ENCODE measurements at regions of chr9 and their contacts with region 1.

Region 1: DNA sequence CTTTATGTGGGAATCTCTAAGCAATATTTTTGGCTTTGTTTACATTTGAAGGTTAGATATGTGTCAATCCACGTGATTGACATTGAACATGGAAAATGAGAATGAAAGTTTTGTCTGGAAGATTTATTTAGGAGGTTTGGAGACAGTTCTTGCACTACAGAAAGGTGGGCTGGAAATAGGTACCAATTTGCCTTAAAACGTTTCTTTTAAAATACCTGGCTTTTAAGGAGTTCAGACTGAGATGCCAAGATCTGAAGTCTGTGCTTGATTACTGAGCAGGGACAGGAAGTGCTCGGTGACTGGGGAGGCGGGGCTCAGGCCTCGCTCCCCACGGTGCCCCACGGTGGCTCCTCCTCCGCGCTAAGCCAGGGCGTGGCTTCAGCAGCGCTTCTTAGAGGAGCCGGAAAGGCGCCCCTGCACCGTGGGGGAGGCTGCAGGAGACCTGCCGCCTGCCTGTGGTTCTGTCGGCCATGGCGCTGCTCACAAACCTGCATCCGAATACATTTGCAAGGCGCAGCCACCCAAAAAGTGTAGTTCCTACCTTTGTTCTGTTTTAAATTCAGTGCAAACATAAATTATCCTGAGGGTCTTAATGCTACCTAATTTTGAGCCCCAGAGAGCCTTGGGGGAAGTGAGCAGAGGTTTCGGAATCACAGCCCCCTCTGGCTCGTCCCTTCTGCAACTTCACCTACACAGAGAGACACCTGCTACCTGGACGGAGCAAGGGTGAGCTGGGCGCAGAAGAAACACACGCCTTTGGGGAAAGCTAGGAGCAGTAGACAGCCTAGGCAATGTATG is 49.2 kb downstream of the USP20 start:
- DNase-seq: peak; percentile 80
- H3K4me3 ChIP-seq: peak overlapping the region in 2 of 3 experiments; percentile 3 to 12
- H3K27ac ChIP-seq: no peak overlapping the region
- H3K4me1 ChIP-seq: peaks cover 23% of the 10 kb centered on the region
- H3K27me3 ChIP-seq: no peaks in the 10 kb centered on the region
- CTCF ChIP-seq: no peak
- POLR2A ChIP-seq: peak; percentile 28

Region 2: DNA sequence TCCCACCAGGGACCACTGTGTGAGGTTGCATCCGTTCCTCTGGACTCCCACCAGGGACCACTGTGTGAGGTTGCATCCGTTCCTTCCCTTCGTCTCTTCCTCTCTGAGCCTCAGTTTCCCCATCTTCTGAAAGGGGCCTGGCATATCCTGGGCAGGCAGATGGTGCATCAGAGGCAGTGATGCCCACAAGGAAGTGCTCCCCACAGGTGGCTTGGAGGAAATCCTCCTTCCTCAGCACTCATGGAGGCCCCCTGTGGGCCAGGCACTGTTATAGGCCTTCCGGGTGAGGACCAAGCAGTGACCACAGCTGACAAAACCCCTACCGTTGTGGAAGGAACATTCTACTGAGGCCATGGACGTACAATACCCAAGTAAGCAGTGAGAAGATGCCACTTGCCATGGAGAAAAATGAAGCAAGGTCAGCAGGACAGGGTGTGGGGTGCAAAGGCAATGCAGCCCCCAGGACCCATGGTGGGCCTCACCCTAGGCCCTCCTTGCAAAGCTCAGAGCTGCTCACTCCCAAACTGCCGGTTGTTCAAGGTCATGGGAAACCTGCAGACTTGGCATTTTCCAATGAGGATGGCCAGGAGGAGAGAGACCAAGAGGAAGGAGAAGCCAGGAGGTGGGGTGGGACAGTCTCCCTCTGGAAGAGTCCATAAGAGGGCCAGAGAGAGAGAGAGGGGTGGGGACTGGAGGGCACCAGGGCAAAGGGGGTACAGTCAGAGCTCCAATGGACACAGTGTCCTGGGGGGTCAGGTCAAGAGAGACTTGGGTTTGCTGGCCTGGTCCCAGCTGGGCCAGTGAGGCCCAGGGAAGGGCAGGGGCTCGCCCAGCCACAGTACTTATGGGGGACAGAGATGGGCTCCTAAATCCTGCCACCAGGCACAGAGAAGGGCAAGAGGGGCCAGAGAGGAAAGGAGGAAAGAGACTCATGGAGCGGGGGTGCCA is 314.6 kb before region 1 on chr9:
- CTCF ChIA-PET with region 1: no interaction called
- POLR2A ChIA-PET with region 1: no interaction called
- dilution Hi-C with region 1: no loop called
- intact Hi-C with region 1: no loop called
- DNase-seq: peak; percentile 30
- H3K4me3 ChIP-seq: no peak overlapping the region
- H3K27ac ChIP-seq: no peak overlapping the region
- H3K4me1 ChIP-seq: peaks cover 2% of the 10 kb centered on the region
- H3K27me3 ChIP-seq: no peaks in the 10 kb centered on the region
- CTCF ChIP-seq: peak; percentile 22 to 48
- POLR2A ChIP-seq: no peak

Region 3: DNA sequence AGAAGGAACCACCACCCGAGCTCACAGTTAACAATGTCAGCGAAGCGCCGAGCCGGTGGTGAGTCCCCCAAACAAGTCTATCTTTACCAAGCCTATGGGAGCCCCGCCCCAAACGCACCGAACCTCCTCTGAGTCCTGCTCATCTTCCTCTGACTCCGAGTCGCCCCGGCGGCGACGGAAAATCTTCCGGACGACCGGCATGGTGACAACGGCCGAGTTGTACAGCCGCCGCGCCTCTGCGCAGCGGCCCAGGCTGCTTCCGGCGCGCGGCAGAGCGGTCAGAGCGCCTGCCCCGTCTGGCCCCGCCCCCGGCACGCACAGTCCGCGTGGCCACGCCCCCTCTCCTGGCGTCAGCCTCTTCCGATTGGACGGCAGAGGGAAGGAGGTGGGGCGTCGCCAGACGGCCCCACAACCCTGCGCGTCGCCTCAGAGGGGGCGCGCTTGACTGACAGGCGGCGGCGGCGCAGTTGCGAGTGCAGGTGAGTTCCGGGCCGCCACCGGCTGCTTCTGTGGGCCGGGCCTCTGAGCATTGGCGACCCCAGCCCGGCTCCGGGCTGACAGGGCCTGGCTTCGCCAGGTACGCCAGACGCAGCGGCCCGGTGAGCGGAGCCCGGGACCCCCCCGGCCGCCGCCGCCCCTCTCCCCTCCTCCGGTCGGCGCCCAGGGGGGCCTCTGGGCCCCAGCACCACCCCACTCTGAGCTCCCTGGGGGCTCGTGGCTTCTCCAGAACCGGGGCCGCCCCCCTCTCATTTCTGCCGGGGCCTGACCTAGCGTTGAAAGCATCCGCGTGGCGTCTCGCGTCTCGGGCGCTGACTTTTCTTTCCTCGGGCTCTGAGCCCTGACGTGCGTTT is 49.2 kb before region 1 on chr9 and contains the starts of genes C9orf78 and USP20:
- CTCF ChIA-PET with region 1: no interaction called
- POLR2A ChIA-PET with region 1: no interaction called
- dilution Hi-C with region 1: no loop called
- intact Hi-C with region 1: loop called (anchors 1 kb)
- DNase-seq: peak; percentile 96
- H3K4me3 ChIP-seq: peak within 1 kb of the TSS; percentile 60 to 82 (median 65)
- H3K27ac ChIP-seq: peak within 1 kb of the TSS; percentile 18
- H3K4me1 ChIP-seq: peaks cover 15% of the 10 kb centered on the region
- H3K27me3 ChIP-seq: no peaks in the 10 kb centered on the region
- CTCF ChIP-seq: no peak
- POLR2A ChIP-seq: peak; percentile 97
- total RNA-seq, gene C9orf78: 34.6 and 34.7 TPM in 2 replicates
- total RNA-seq, gene USP20: 13.4 and 17.4 TPM in 2 replicates

Region 4: GRCh38 chr9:129968690-129969501 is 84.5 kb after region 1 on chr9:
- CTCF ChIA-PET with region 1: interaction called, 7 read pairs
- POLR2A ChIA-PET with region 1: interaction called, 6 read pairs
- dilution Hi-C with region 1: no loop called
- intact Hi-C with region 1: loop called (anchors 1 kb)
- DNase-seq: peak; percentile 96
- H3K4me3 ChIP-seq: no peak overlapping the region
- H3K27ac ChIP-seq: peak overlapping the region; percentile 50
- H3K4me1 ChIP-seq: peaks cover 26% of the 10 kb centered on the region
- H3K27me3 ChIP-seq: no peaks in the 10 kb centered on the region
- CTCF ChIP-seq: no peak
- POLR2A ChIP-seq: no peak

Region 5: DNA sequence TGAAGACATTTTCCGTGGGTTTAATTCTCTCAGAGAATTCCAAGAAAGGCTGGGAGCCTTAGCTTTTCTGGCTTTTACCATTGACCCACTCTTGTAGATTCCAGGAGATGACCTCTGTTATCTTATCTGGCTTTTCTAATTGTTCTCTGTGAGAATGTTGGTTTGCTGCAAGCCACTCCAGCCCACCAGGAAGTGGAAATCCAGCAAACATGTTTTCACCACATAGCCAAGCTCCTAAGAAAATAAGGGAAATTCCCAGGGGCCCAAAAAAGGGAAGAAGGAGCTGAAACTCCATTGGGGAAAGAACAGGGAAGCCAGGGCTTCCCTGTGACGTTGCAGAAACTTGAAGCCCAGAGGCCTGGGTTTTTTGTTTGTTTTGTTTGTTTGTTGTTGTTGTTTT is 189.0 kb after region 1 on chr9:
- CTCF ChIA-PET with region 1: interaction called, 5 read pairs
- POLR2A ChIA-PET with region 1: no interaction called
- dilution Hi-C with region 1: no loop called
- intact Hi-C with region 1: loop called (anchors 1 kb)
- DNase-seq: peak; percentile 94
- H3K4me3 ChIP-seq: no peak overlapping the region
- H3K27ac ChIP-seq: peak overlapping the region; percentile 88
- H3K4me1 ChIP-seq: peaks cover 33% of the 10 kb centered on the region
- H3K27me3 ChIP-seq: no peaks in the 10 kb centered on the region
- CTCF ChIP-seq: no peak
- POLR2A ChIP-seq: no peak

Region 6: DNA sequence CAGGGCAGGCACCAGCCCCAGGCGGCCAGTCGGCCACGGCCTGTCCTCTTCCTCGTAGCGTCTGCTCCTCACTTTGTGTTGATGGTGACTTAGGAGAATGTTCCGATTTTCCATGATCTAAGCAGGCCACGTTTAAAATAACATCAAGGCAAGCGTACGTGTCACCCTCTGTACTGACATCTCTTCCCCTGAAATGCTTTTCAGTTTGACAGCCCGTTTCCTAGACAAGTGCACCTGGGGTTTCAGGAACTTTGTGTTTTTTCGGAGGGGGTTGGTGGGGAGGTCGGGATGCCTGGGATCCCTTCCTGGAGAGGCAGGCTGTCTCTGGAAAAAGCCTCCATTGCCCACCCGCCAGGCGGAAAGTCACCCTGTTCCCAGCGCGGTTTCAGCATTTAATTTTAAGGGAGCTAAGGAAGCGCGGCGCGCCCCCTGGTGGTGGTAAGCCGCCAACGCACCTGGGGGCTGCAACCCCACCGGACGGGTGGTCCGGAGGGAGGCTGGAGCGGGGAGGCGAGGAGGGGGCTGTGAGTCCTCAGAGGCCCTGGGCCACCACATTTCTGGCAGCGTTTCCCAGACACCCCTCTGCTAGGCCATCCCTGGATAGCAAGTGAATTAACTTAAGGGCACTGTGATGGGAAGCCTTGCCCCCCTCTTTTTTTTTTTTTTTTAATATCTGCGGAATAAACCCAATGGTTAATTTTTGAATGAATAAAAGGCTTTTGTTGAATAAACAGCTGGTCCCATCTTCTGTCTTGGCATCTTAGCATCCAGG is 351.7 kb after region 1 on chr9:
- CTCF ChIA-PET with region 1: interaction called, 3 read pairs
- POLR2A ChIA-PET with region 1: no interaction called
- dilution Hi-C with region 1: no loop called
- intact Hi-C with region 1: loop called (anchors 10 kb)
- DNase-seq: peak; percentile 49
- H3K4me3 ChIP-seq: no peak overlapping the region
- H3K27ac ChIP-seq: no peak overlapping the region
- H3K4me1 ChIP-seq: peaks cover 8% of the 10 kb centered on the region
- H3K27me3 ChIP-seq: no peaks in the 10 kb centered on the region
- CTCF ChIP-seq: peak; percentile 94 to 98
- POLR2A ChIP-seq: no peak

Region 7: DNA sequence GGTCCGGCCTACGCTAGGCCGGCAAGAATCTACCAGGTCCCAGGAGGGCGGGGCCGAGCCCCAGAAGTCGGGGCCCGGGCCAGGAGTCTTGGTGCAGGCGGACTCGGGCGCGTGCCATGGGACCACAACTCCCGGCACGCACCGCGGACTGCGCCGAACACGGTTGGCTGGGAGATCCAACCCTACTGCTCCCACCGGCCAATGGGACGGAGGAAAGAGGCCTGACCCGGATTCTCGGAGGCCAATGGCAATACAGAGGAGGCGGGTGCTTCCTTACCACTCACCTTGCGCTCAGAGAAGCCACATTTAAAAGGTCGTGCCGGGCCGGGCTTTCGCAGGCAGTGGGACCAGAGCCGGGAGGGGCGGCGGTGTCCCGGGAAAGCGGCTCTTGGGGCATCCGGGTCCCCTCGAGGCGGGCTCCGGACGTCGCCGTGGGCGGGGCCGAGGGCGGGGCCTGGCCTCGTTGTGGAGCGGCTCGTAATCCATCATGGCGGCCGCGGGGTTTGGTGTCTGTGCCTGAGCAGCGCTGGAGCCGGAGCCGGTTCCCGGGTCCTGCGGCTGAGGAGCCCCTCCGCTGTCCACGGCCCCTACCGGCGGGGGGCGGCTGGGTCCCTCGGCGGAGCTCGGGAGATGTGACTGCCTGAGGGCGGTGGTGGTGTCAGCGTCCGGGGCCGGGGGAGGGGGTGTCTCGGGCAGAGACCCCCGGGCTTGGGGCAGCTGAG is 828.3 kb after region 1 on chr9:
- CTCF ChIA-PET with region 1: no interaction called
- POLR2A ChIA-PET with region 1: no interaction called
- dilution Hi-C with region 1: no loop called
- intact Hi-C with region 1: no loop called
- DNase-seq: peak; percentile 98
- H3K4me3 ChIP-seq: peak overlapping the region; percentile 78 to 97 (median 81)
- H3K27ac ChIP-seq: peak overlapping the region; percentile 81
- H3K4me1 ChIP-seq: peaks cover 12% of the 10 kb centered on the region
- H3K27me3 ChIP-seq: no peaks in the 10 kb centered on the region
- CTCF ChIP-seq: no peak
- POLR2A ChIP-seq: peak; percentile 85